PC-9 (cell line): ENCODE measurements at regions of chr1 and their contacts with region 1.

Region 1: GRCh38 chr1:2132222-2133038 is 62.1 kb downstream of the FAAP20 start:
- DNase-seq: peak; percentile 45 to 67
- H3K4me3 ChIP-seq: peak overlapping the region; percentile 65
- H3K27ac ChIP-seq: peak overlapping the region; percentile 67
- H3K4me1 ChIP-seq: peaks cover 47% of the 10 kb centered on the region
- H3K27me3 ChIP-seq: no peaks in the 10 kb centered on the region
- CTCF ChIP-seq: peak; percentile 58

Region 2: DNA sequence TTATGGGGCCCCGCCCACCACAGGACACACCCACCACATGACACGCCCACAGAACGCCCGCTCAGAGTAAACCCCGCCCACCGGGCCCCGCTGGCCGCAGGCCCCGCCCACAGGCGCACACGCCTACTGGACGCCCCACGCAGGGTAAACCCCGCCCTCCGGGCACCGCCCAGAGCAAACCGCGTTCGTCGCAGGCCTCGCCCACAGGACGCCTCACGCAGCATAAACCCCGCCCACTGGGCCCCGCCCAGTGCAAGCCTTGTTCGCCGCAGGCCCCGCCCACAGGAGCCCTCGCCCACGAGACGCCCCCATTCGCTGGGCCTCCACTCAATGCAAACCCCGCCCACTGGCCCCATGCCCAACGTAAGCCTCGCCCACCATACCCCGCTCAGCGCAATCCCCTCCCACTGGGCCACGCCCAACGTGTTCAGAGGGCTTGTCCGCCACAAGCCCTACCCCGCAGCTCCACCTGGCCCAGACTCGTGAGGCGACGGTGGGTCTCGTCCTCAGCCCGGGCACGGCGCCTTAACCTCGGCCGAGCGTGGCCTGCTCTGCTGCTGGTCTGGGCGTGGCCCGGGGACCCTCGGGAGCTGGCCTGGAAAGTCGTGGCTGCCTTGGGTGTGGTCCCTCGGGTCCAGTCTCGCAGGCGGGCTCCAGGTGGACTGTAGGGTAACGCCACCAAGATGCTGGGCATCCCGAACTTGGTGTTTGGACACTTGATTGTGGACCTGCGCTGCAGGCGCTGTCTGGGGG is 212.9 kb before region 1 on chr1:
- CTCF ChIA-PET with region 1: no interaction called
- POLR2A ChIA-PET with region 1: no interaction called
- intact Hi-C with region 1: loop called (anchors 2 kb)
- DNase-seq: peak; percentile 88 to 99
- H3K4me3 ChIP-seq: peak overlapping the region; percentile 78; the same call in 1 of the 2 replicates
- H3K27ac ChIP-seq: no peak overlapping the region
- H3K4me1 ChIP-seq: peaks cover 9% of the 10 kb centered on the region; the same call in 1 of the 2 replicates
- H3K27me3 ChIP-seq: 0 out of 2 replicates have a peak, but pooled peaks cover 1% of the 10 kb centered on the region
- CTCF ChIP-seq: no peak

Region 3: GRCh38 chr1:2049718-2050427 is 82.6 kb before region 1 on chr1 and contains the start of gene PRKCZ:
- CTCF ChIA-PET with region 1: no interaction called
- POLR2A ChIA-PET with region 1: no interaction called
- intact Hi-C with region 1: loop called (anchors 2 kb)
- DNase-seq: peak; percentile 80 to 98
- H3K4me3 ChIP-seq: peak within 1 kb of the TSS; percentile 79
- H3K27ac ChIP-seq: peak within 1 kb of the TSS; percentile 56
- H3K4me1 ChIP-seq: 0 out of 2 replicates have a peak, but pooled peaks cover 5% of the 10 kb centered on the region
- H3K27me3 ChIP-seq: no peaks in the 10 kb centered on the region
- CTCF ChIP-seq: peak; percentile 6
- total RNA-seq, gene PRKCZ: 36.0 and 36.2 TPM in 2 replicates

Region 4: GRCh38 chr1:2115681-2116341 is 16.6 kb before region 1 on chr1:
- CTCF ChIA-PET with region 1: no interaction called
- POLR2A ChIA-PET with region 1: no interaction called
- intact Hi-C with region 1: no loop called
- DNase-seq: no peak
- H3K4me3 ChIP-seq: no peak overlapping the region
- H3K27ac ChIP-seq: no peak overlapping the region
- H3K4me1 ChIP-seq: no peaks in the 10 kb centered on the region
- H3K27me3 ChIP-seq: no peaks in the 10 kb centered on the region
- CTCF ChIP-seq: no peak

Region 5: GRCh38 chr1:2174348-2175054 is 42.1 kb after region 1 on chr1:
- CTCF ChIA-PET with region 1: interaction called, 4 read pairs
- POLR2A ChIA-PET with region 1: no interaction called
- intact Hi-C with region 1: loop called (anchors 1 kb)
- DNase-seq: peak in 1 of 2 experiments; percentile 56
- H3K4me3 ChIP-seq: no peak overlapping the region
- H3K27ac ChIP-seq: no peak overlapping the region
- H3K4me1 ChIP-seq: no peaks in the 10 kb centered on the region
- H3K27me3 ChIP-seq: no peaks in the 10 kb centered on the region
- CTCF ChIP-seq: peak; percentile 89

Region 6: DNA sequence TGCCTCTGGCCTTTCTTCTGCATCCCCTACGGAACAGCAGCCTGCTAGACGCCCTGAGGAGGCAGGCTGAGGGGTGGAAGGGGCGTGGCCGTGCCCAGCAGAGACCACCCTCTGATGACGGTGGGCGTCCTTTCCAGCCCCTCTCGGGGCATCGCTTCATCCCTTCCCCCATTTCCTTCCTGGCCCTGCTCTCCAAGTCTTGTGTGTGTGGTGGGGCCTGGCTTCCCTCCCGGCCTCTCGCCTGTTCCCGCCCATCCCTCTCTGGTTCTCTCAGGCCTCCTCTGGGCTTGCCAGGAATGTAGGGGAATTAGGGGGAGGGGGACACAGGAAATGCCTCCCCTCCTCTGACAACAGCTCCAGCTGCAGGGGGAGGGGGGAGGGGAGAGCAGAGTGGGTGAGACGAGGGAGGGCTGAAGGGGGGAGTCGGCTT is 146.8 kb after region 1 on chr1:
- CTCF ChIA-PET with region 1: no interaction called
- POLR2A ChIA-PET with region 1: no interaction called
- intact Hi-C with region 1: no loop called
- DNase-seq: no peak
- H3K4me3 ChIP-seq: no peak overlapping the region
- H3K27ac ChIP-seq: no peak overlapping the region
- H3K4me1 ChIP-seq: no peaks in the 10 kb centered on the region
- H3K27me3 ChIP-seq: no peaks in the 10 kb centered on the region
- CTCF ChIP-seq: no peak